Posterior cingulate gyrus (tissue), 11 donors: ENCODE measurements at regions of chr10 and their contacts with region 1.

Region 1: GRCh38 chr10:63217120-63217605 is 84.0 kb downstream of the NRBF2 start:
- DNase-seq: no peak

Region 2: GRCh38 chr10:63054889-63055611 is 162.1 kb before region 1 on chr10:
- intact Hi-C with region 1: no loop called
- DNase-seq: no peak

Region 3: GRCh38 chr10:63465293-63466143 is 248.4 kb after region 1 on chr10 and contains the start of gene JMJD1C:
- intact Hi-C with region 1: loop called (anchors 2 kb)
- DNase-seq: peak; percentile 56 to 95 (median 70)

Region 4: DNA sequence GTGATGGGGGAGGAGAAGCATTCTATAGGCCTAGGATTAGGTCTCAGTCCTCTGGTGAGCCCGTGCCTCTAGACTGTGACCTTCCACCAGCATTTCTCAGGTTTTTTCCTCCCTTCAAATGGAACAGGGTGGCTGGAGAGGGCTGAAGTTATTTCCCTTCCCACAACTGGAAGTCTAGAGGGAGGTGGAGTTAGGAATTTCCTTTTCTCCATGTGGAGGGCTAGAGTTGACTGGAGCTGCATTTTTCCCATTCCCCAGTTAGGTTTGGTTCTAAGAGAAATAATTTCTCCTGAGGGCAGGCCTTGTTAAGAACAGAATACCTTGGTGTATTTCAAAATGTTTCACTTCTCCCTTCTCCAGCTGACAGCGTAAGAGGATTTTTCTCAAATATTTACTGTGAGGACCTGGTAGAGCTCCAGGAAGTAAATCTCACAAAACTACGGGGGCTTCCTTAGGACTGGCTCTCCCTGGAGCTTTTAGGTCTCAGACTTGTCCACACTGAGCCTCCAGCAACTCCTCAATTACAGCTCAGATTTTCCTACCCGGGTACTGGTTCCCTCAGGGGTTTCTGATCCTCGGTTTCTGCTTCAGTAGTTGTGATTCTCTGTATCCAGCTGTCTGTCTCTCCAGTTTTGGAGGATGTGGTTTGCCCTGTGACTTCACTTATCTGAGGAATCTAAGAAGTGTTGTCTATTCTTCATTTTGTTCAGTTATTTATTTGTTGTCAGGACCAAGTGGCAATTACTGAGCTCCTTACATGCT is 298.0 kb after region 1 on chr10:
- intact Hi-C with region 1: loop called (anchors 5 kb)
- DNase-seq: no peak

Region 5: GRCh38 chr10:63711867-63712716 is 494.9 kb after region 1 on chr10:
- intact Hi-C with region 1: loop called (anchors 5 kb)
- DNase-seq: peak; percentile 51 to 93 (median 63)

Region 6: GRCh38 chr10:63738410-63738809 is 521.2 kb after region 1 on chr10:
- intact Hi-C with region 1: no loop called
- DNase-seq: peak in 6 of 10 donors; percentile 27 to 86 (median 54)